HEK293T (cell line): ENCODE measurements at regions of chr4 and their contacts with region 1.

Region 1: DNA sequence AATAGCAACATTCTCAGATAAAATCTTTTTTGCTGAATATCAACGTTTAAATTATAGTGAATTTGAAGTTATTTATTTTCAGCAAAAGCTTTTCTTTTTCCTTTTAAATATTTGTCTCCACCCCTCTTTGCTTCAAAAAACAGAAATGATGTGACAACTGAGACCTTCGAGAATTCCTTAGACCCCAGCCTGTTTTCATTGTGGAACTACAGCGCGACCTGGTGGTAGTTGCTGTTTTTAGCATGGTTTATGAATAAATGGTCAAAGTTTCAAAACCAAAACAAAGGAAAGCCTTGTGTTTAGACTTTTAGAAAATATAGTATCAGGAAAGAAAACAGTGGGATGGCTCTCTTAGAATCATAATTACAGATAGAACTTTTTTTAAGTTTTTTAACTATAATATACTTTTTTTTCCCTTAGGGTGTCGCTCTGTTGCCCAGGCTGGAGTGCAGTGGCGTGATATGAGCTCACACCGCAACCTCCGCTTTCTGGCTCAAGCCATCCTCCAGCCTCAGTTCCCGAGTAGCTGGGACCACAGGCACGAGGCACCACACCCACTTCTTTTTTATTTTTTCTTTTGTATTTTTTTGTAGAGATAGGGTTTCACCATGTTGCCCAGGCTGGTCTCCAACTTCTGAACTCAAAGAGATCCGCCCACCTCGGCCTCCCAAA is 26.8 kb upstream of the TMEM184C start:
- DNase-seq: peak; percentile 57

Region 2: GRCh38 chr4:147019061-147019460 is 571.3 kb before region 1 on chr4:
- CTCF ChIA-PET with region 1: interaction called, 16 read pairs
- POLR2A ChIA-PET with region 1: no interaction called
- DNase-seq: peak; percentile 53

Region 3: DNA sequence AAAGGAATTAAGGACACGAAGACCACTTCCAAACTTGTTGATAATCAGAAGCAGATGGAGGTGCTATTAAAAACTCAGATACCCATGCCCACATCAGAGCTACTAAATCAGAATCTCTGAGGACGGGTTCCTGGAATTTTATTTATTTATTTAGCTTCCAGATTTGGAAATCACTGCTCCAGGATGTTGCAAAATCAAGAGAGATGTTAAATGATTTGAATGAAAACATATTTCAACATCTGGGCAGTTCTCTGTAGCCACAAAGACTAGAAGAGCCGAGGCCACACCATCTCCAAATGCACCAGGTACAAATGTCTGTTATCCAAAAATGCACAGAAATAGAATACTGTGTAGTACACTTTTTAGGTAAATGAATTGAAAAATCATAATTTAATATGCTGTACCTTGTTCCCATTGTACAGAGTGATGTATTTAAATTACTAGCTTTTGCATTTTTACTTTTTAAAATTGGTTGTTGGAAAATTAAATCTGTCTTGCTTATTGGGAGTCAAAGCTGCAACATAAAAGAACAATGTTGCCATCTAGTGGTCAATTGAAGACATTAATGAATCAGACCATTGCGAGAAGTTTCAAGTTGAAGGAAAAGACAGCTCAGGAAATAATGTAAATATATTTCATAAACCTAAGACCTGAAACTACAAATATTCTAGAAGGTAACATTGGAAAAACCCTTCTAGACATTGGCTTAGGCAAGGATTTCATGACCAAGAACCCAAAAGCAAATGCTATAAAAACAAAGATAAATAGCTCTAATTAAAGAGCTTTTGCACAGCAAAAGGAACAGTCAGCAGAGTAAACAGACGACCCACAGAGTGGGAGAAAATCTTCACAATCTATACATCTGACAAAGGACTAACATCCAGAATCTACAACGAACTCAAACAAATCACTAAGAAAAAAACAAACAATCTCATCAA is 493.4 kb before region 1 on chr4:
- CTCF ChIA-PET with region 1: interaction called, 11 read pairs
- POLR2A ChIA-PET with region 1: no interaction called
- DNase-seq: peak; percentile 37

Region 4: GRCh38 chr4:147160908-147161513 is 429.4 kb before region 1 on chr4:
- CTCF ChIA-PET with region 1: interaction called, 22 read pairs
- POLR2A ChIA-PET with region 1: no interaction called
- DNase-seq: peak; percentile 57

Region 5: DNA sequence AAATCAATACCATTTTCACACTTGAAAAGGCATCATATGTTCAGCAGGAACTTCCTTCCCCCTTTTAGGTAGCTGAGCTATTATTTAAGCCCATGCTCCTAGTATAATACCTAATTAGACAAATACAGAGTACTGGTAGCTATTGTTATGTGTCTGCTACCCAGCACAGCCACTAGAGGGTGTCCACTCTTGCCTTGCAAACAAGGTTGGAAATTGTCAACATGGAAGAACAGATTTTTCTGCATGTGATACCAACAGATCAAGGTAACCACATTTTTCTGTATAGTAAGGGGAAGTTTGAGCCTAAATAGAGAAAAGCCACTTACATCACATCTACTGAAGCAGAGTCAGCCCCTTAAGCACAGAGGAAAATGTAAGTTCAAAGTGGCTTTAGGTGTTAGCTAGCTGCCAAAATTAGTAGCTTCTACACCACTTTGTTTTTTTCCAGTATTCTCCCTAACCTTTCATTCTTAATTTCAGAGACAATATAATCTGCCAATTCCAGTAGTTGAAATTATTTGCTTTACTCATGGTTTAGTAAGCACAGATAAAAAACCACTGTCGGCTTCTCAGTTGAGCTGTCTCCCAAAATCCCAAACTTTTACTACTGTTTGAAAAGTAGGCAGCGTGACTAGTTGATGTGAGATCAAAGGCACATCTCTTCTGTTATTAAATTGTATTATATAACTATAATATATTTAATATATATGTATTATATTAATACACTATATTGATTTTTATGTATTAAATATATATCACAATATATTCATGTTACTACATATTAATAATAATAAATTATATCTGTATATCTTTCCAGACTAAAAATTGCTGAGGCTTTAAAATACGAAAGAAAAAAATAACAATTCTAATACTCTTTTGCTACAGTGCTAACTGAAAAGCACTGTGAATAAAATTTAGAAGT is 71.3 kb before region 1 on chr4:
- CTCF ChIA-PET with region 1: interaction called, 11 read pairs
- POLR2A ChIA-PET with region 1: no interaction called
- DNase-seq: peak; percentile 65

Region 6: GRCh38 chr4:147610686-147611085 is 20.3 kb after region 1 on chr4:
- CTCF ChIA-PET with region 1: no interaction called
- POLR2A ChIA-PET with region 1: no interaction called
- DNase-seq: no peak